ENCODE measurements at regions of chr12 and their contacts with region 1.

Region 1: GRCh38 chr12:106302401-106303201 is at the start of gene TCP11L2:
- DNase-seq: peak; percentile 59 to 79
- H3K4me3 ChIP-seq: peak within 1 kb of the TSS; percentile 99
- H3K27ac ChIP-seq: peak within 1 kb of the TSS; percentile 96
- H3K4me1 ChIP-seq: peaks cover 66% of the 10 kb centered on the region
- H3K27me3 ChIP-seq: no peaks in the 10 kb centered on the region
- CTCF ChIP-seq: no peak
- total RNA-seq, gene TCP11L2: 34.6 and 35.1 TPM in 2 replicates

Region 2: GRCh38 chr12:106345739-106346138 is 43.1 kb after region 1 on chr12:
- CTCF ChIA-PET with region 1: no interaction called
- POLR2A ChIA-PET with region 1: interaction called, 3 read pairs
- intact Hi-C with region 1: loop called (anchors 5 kb)
- DNase-seq: peak; percentile 10 to 40
- H3K4me3 ChIP-seq: no peak overlapping the region
- H3K27ac ChIP-seq: no peak overlapping the region
- H3K4me1 ChIP-seq: peaks cover 16% of the 10 kb centered on the region
- H3K27me3 ChIP-seq: no peaks in the 10 kb centered on the region
- CTCF ChIP-seq: peak; percentile 51; the same call in 1 of the 2 replicates